CD4-positive, alpha-beta T cell (primary cell): ENCODE measurements at regions of chr11 and their contacts with region 1.

Region 1: GRCh38 chr11:74398244-74399159 is at the start of gene PGM2L1:
- DNase-seq: peak; percentile 86 to 96 (median 92)
- ATAC-seq: peak; percentile 84
- H3K4me3 ChIP-seq: peak within 1 kb of the TSS; percentile 96
- H3K4me3 Mint-ChIP-seq: peak within 1 kb of the TSS; percentile 100
- H3K27ac ChIP-seq: peak within 1 kb of the TSS; percentile 68 to 77
- H3K27ac Mint-ChIP-seq: peak within 1 kb of the TSS; percentile 89
- H3K4me1 ChIP-seq: peaks cover 3% of the 10 kb centered on the region
- H3K4me1 Mint-ChIP-seq: peaks cover 30% of the 10 kb centered on the region
- H3K27me3 ChIP-seq: no peaks in the 10 kb centered on the region
- H3K27me3 Mint-ChIP-seq: no peaks in the 10 kb centered on the region
- CTCF ChIP-seq: no peak
- total RNA-seq, gene PGM2L1: 10.2 to 11.8 TPM

Region 2: DNA sequence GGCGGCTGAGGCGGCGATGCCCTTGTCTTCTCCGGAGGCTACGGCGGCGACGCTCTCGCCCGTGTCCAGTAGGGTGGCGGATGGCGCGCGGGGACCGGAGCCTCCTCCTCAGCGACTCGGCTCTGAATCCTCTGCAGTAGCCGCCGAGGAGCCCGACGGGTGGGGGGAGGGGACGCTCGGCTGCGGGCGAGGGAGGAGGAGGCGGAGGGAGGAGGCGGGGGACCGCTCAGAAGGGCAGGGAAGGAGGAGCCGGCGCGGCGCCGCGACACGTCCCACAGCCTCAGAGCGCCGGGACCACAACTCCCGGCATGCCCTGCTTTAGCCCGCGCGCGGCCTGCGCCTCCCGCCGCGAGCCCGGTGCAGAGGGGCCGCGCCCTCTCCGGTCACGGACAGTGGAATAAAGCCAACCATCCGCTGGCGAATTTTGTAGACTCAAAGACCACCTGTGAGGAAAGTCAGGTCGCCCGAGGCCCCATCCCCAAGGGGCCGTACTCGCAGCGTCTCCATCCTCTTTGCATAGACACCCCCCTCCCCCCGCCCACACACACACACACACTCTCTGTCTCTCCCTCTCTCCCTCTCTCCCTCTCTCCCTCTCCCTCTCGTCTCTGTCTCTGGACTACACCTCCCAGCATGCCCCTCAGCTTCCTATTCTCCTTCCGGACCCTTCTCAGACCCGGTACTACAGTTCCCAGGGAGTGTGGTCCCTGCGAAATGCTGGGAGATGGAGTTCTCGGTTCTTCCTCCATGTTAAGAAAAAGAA is 800.4 kb before region 1 on chr11 and contains the start of gene FAM168A:
- CTCF ChIA-PET with region 1: no interaction called
- POLR2A ChIA-PET with region 1: no interaction called
- intact Hi-C with region 1: loop called in 1 of 2 experiments (anchors 5 kb)
- DNase-seq: peak; percentile 87 to 98 (median 92)
- ATAC-seq: peak; percentile 88
- H3K4me3 ChIP-seq: peak within 1 kb of the TSS; percentile 84
- H3K4me3 Mint-ChIP-seq: peak within 1 kb of the TSS; percentile 95
- H3K27ac ChIP-seq: peak within 1 kb of the TSS; percentile 68 to 77
- H3K27ac Mint-ChIP-seq: peak within 1 kb of the TSS; percentile 97
- H3K4me1 ChIP-seq: peaks cover 15% of the 10 kb centered on the region
- H3K4me1 Mint-ChIP-seq: peaks cover 47% of the 10 kb centered on the region
- H3K27me3 ChIP-seq: no peaks in the 10 kb centered on the region
- H3K27me3 Mint-ChIP-seq: no peaks in the 10 kb centered on the region
- CTCF ChIP-seq: peak; percentile 8
- total RNA-seq, gene FAM168A: 17.9 to 19.4 TPM

Region 3: GRCh38 chr11:73876424-73877300 is 521.8 kb before region 1 on chr11 and contains the starts of genes COA4 and PAAF1:
- CTCF ChIA-PET with region 1: no interaction called
- POLR2A ChIA-PET with region 1: no interaction called
- intact Hi-C with region 1: loop called in 1 of 2 experiments (anchors 10 kb)
- DNase-seq: peak; percentile 83 to 98 (median 90)
- ATAC-seq: peak; percentile 95
- H3K4me3 ChIP-seq: peak within 1 kb of the TSS; percentile 74
- H3K4me3 Mint-ChIP-seq: peak within 1 kb of the TSS; percentile 96
- H3K27ac ChIP-seq: peak within 1 kb of the TSS; percentile 71 to 90
- H3K27ac Mint-ChIP-seq: peak within 1 kb of the TSS; percentile 91
- H3K4me1 ChIP-seq: peaks cover 30% of the 10 kb centered on the region
- H3K4me1 Mint-ChIP-seq: peaks cover 52% of the 10 kb centered on the region
- H3K27me3 ChIP-seq: no peaks in the 10 kb centered on the region
- H3K27me3 Mint-ChIP-seq: no peaks in the 10 kb centered on the region
- CTCF ChIP-seq: no peak
- total RNA-seq, gene COA4: 20.7 to 23.9 TPM
- total RNA-seq, gene PAAF1: 6.2 to 7.6 TPM

Region 4: GRCh38 chr11:74449369-74449931 is 50.9 kb after region 1 on chr11:
- CTCF ChIA-PET with region 1: interaction called, 11 read pairs
- POLR2A ChIA-PET with region 1: interaction called, 5 read pairs
- intact Hi-C with region 1: no loop called
- DNase-seq: peak in 12 of 14 experiments; percentile 2 to 82 (median 26)
- ATAC-seq: peak; percentile 95
- H3K4me3 ChIP-seq: no peak overlapping the region
- H3K4me3 Mint-ChIP-seq: no peak overlapping the region
- H3K27ac ChIP-seq: no peak overlapping the region
- H3K27ac Mint-ChIP-seq: no peak overlapping the region
- H3K4me1 ChIP-seq: no peaks in the 10 kb centered on the region
- H3K4me1 Mint-ChIP-seq: no peaks in the 10 kb centered on the region
- H3K27me3 ChIP-seq: no peaks in the 10 kb centered on the region
- H3K27me3 Mint-ChIP-seq: peaks cover 13% of the 10 kb centered on the region
- CTCF ChIP-seq: peak; percentile 76

Region 5: GRCh38 chr11:74592441-74593362 is 194.2 kb after region 1 on chr11 and contains the start of gene POLD3:
- CTCF ChIA-PET with region 1: no interaction called
- POLR2A ChIA-PET with region 1: interaction called, 10 read pairs
- intact Hi-C with region 1: loop called in 1 of 2 experiments (anchors 5 kb)
- DNase-seq: peak; percentile 91 to 96 (median 94)
- ATAC-seq: peak; percentile 97
- H3K4me3 ChIP-seq: peak within 1 kb of the TSS; percentile 84
- H3K4me3 Mint-ChIP-seq: peak within 1 kb of the TSS; percentile 97
- H3K27ac ChIP-seq: peak within 1 kb of the TSS; percentile 85 to 90
- H3K27ac Mint-ChIP-seq: peak within 1 kb of the TSS; percentile 92
- H3K4me1 ChIP-seq: peaks cover 13% of the 10 kb centered on the region
- H3K4me1 Mint-ChIP-seq: peaks cover 28% of the 10 kb centered on the region
- H3K27me3 ChIP-seq: no peaks in the 10 kb centered on the region
- H3K27me3 Mint-ChIP-seq: no peaks in the 10 kb centered on the region
- CTCF ChIP-seq: no peak
- total RNA-seq, gene POLD3: 4.6 to 5.2 TPM

Region 6: DNA sequence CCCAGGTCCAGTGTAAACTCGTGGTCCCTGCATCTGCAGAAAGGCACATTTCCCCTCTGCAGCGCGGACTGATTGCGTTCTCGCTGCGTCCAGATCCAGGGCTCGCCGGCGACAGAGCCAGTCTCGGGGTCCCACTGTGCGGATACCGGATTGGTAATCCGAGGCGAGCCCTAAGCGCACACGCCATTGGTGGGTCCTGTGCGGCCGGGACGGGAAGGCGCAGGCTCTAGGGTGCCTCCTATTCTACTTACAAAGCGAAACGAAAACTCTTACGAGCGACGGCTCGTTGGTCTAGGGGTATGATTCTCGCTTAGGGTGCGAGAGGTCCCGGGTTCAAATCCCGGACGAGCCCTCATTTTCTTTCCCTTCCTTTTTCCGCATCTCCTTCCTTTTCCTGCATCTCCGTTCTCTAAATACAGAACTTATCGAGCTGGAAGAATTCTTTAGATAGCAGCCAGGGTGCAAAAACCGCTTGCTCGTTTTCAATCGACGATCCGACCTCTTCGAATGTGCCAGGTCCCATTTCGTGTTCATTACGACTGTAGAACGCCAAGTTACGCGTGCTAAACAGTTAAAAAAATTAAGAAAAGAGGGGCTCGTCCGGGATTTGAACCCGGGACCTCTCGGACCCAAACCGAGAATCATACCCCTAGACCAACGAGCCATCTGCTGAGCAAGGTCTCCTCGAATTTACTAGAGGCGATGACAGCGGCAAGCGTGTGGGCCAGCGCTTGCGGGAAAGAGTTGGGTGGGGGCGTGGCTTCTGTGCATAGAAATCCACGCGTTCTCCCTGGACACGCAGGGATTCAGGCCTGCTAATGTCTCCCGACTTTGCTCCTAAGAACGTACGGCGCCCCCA is 1837.0 kb after region 1 on chr11:
- CTCF ChIA-PET with region 1: no interaction called
- POLR2A ChIA-PET with region 1: no interaction called
- intact Hi-C with region 1: loop called in 1 of 2 experiments (anchors 5 kb)
- DNase-seq: peak; percentile 82 to 96 (median 90)
- ATAC-seq: peak; percentile 77
- H3K4me3 ChIP-seq: peak overlapping the region; percentile 84
- H3K4me3 Mint-ChIP-seq: peak overlapping the region; percentile 100
- H3K27ac ChIP-seq: peak overlapping the region; percentile 10 to 37
- H3K27ac Mint-ChIP-seq: peak overlapping the region; percentile 99
- H3K4me1 ChIP-seq: peaks cover 58% of the 10 kb centered on the region
- H3K4me1 Mint-ChIP-seq: peaks cover 54% of the 10 kb centered on the region
- H3K27me3 ChIP-seq: no peaks in the 10 kb centered on the region
- H3K27me3 Mint-ChIP-seq: peaks cover 18% of the 10 kb centered on the region
- CTCF ChIP-seq: no peak